ENCODE measurements at regions of chr1 and their contacts with region 1.

Region 1: DNA sequence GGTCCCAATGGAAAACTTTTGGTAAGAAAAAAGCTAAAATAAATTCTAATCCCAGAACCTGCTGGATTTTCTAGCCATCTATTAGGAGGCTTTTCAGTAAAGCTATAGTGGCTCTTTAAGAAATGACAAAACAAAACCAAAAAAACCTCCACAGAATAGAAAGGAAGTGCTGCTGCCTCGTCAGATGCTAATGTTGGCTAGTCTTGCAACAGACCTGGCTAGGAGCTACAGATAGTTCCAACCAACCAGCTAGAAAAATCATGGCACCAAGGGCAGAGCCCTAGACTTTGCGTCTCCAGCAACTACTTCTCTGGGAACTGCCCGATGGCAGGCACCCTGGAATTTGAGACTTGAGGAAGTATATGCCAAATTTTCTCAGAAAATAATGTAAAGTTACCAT is 7.6 kb downstream of the CD101 start:
- DNase-seq: peak in 4 of 5 donors; percentile 21 to 27 (median 22)
- H3K4me3 ChIP-seq: no peak overlapping the region
- H3K4me3 Mint-ChIP-seq: peak overlapping the region in 7 of 8 donors; percentile 2 to 52 (median 41)
- H3K27ac ChIP-seq: no peak overlapping the region
- H3K27ac Mint-ChIP-seq: peak overlapping the region in 5 of 7 donors; percentile 38 to 83 (median 75)
- H3K4me1 ChIP-seq: peaks cover 18% of the 10 kb centered on the region
- H3K4me1 Mint-ChIP-seq: peaks cover 15 to 24% (median 22%) of the 10 kb centered on the region in 4 donors
- H3K27me3 ChIP-seq: no peaks in the 10 kb centered on the region
- H3K27me3 Mint-ChIP-seq: no peaks in the 10 kb centered on the region

Region 2: DNA sequence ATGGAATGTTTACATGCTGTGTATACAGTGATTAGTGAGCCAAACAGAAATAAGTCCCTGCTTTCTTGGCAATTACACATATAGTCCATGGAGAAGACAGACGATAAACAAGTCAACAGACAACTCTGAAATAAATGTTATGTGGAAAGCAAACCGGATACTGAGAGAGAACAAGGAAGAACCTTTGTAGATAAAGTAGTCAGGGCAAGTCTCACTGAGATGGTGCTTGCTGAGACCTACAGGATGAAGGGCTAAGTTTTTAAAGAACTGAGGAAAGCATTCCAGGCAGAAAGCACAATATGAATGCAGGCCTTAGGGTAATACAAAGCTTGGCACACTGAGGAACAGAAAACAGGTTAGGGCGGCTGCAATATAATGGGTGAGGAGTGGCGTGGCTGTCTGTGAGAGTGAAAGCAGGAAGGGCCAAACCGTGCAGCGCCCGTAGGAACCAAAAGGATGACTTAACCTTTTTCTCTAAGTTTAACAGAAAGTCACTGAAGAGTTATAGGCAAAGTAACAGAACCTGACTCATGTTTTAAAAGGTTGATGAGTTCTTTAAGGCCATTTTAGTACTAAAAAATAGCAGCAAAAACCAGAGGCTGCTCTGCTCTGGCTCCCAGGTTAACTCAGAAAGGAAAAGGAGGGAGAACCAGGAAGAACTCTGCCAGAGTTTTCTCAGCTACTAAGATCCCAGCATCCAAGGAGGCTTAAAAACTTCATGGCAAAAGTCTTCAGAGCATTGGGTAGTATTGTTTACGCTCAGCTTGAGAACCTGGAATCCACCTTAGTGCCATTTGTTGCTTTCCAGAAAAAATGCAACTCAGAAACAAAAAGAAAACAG is 42.3 kb after region 1 on chr1:
- CTCF ChIA-PET with region 1: interaction called, 4 read pairs
- POLR2A ChIA-PET with region 1: interaction called, 8 read pairs
- intact Hi-C with region 1: loop called (anchors 5 kb)
- DNase-seq: peak in 4 of 5 donors; percentile 17 to 32 (median 26)
- H3K4me3 ChIP-seq: peak overlapping the region; percentile 52 to 53
- H3K4me3 Mint-ChIP-seq: peak overlapping the region; percentile 83 to 93 (median 88)
- H3K27ac ChIP-seq: peak overlapping the region; percentile 40
- H3K27ac Mint-ChIP-seq: peak overlapping the region; percentile 42 to 97 (median 95)
- H3K4me1 ChIP-seq: peaks cover 32% of the 10 kb centered on the region
- H3K4me1 Mint-ChIP-seq: peaks cover 21 to 33% (median 28%) of the 10 kb centered on the region in 4 donors
- H3K27me3 ChIP-seq: no peaks in the 10 kb centered on the region
- H3K27me3 Mint-ChIP-seq: no peaks in the 10 kb centered on the region